Body of pancreas (tissue), 4 donors: ENCODE measurements at regions of chr7 and their contacts with region 1.

Region 1: DNA sequence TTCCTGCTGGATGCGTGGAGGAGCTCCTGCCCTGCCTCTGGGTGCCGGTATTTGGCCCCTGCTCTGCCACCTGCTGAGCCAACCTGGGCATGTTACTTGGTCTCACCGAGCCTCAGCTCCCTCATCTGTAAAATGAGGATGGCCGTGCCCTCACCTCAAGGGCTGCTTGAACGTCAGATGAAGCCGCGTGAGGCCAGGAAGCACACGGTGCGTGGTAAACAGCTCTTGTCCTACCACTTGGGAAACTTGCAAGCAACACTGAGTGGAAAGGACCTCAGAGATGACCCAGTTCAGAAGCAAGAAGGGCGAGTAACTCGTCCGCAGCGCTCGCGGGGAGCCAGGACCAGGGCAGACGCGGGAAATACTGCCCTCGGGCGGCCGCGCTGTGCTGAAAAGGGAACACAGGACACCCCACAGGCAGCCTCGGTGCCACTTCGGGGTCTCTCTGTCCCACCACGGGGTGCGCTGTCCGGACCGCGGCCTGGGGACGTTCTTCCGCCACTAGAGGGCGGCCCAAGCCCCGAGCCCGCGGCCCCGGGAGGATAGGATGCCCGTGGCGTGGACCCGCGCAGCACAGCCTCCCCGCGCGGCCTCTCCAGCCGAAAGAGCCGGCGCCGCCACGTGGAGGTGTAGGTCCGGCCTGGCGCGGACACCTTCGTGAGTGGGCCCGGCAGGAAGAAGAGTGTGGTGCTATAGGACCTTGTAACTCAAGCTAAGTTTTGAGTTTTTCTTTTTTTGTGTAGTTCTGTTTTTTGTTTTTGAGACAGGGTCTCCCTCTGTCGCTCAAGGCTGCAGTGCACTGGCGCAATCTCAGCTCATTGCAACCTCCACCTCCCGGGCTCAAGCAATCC is 94.1 kb downstream of the PRKAG2 start:
- DNase-seq: peak; percentile 64 to 78 (median 68)
- ATAC-seq: peak; percentile 80
- H3K4me3 ChIP-seq: no peak overlapping the region
- H3K27ac ChIP-seq: peak overlapping the region in 1 of 4 donors; percentile 17
- H3K4me1 ChIP-seq: peaks cover 19% of the 10 kb centered on the region
- H3K27me3 ChIP-seq: no peaks in the 10 kb centered on the region
- CTCF ChIP-seq: peak; percentile 79 to 96 (median 92)
- POLR2A ChIP-seq: no peak

Region 2: GRCh38 chr7:151863386-151864079 is 80.7 kb after region 1 on chr7:
- intact Hi-C with region 1: loop called (anchors 10 kb)
- DNase-seq: peak in 3 of 4 donors; percentile 31 to 53 (median 49)
- ATAC-seq: no peak
- H3K4me3 ChIP-seq: no peak overlapping the region
- H3K27ac ChIP-seq: no peak overlapping the region
- H3K4me1 ChIP-seq: peaks cover 27% of the 10 kb centered on the region
- H3K27me3 ChIP-seq: no peaks in the 10 kb centered on the region
- CTCF ChIP-seq: peak in 5 of 7 experiments; percentile 5 to 53 (median 41)
- POLR2A ChIP-seq: no peak

Region 3: GRCh38 chr7:151936207-151936606 is 153.4 kb after region 1 on chr7:
- intact Hi-C with region 1: loop called (anchors 10 kb)
- DNase-seq: no peak
- ATAC-seq: no peak
- H3K4me3 ChIP-seq: no peak overlapping the region
- H3K27ac ChIP-seq: no peak overlapping the region
- H3K4me1 ChIP-seq: peaks cover 13% of the 10 kb centered on the region
- H3K27me3 ChIP-seq: no peaks in the 10 kb centered on the region
- CTCF ChIP-seq: no peak
- POLR2A ChIP-seq: no peak

Region 4: DNA sequence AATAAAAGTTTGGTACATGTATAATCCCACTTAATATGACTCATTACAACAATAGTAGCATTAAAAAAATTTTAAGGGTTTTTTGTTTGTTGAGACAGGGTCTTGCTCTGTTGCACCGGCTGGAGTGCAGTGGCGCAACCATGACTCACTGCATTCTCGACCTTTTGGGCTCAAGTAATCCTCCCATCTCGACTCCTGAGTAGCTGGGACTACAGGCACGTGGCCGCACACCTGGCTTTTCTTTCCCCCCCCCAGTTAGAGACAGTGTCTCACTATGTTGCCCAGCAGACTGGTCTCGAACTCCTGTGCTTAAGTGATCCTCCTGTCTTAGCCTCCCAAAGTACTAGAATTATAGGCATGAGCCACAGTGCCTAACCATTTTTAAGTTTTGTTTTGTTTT is 612.3 kb after region 1 on chr7:
- intact Hi-C with region 1: no loop called
- DNase-seq: no peak
- ATAC-seq: no peak
- H3K4me3 ChIP-seq: no peak overlapping the region
- H3K27ac ChIP-seq: no peak overlapping the region
- H3K4me1 ChIP-seq: peaks cover 50% of the 10 kb centered on the region
- H3K27me3 ChIP-seq: no peaks in the 10 kb centered on the region
- CTCF ChIP-seq: no peak
- POLR2A ChIP-seq: no peak